ENCODE measurements at regions of chrX and their contacts with region 1.

Region 1: GRCh38 chrX:45435481-45435880 is 234.8 kb upstream of the DIPK2B start:
- DNase-seq: no peak
- ATAC-seq: no peak

Region 2: DNA sequence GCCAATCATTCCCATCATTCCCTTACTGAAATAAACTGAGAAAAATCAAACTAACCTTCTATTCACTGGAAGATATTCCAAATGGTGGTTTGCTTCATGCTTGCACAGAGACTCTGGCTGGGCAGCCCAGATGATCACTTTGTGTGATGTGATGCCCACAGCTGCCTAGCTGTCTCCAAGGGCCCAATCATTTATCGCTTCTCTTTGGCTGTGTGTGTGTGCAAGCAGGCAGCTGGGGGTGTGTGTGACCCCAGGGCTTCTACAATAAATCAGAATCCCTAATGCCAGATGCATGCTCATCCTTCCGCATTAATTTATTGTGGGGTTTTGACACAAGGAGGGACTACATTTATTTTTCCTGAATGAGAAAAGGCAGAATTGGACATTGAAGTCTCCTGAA is 1322.1 kb before region 1 on chrX:
- intact Hi-C with region 1: loop called (anchors 5 kb)
- DNase-seq: no peak
- ATAC-seq: no peak

Region 3: GRCh38 chrX:44637282-44637681 is 798.2 kb before region 1 on chrX:
- intact Hi-C with region 1: no loop called
- DNase-seq: no peak
- ATAC-seq: no peak

Region 4: DNA sequence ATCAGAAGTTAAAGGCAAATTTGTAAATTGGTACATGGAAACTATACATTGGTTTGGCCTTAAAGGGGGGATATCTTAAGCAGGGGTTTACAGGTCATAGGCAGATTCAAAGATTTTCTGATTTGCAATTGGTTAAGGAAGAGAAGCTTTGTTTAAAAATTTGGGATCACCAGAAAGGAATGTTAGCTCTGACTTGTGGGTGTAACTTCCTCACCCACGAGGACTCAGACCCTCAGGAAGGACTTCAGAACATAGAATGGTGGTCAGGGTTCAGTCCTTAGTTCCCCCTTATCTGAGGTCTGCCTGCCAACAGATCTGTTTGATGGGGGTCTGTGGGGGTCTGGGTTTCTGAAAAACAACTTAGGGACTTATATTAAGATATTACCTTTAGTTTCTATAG is 192.6 kb after region 1 on chrX:
- intact Hi-C with region 1: no loop called
- DNase-seq: no peak
- ATAC-seq: no peak

Measured in sciatic nerve (tissue), 2 donors.